Heart left ventricle (tissue), 16 donors: ENCODE measurements at regions of chr5 and their contacts with region 1.

Region 1: GRCh38 chr5:145953202-145953601 is 16.8 kb downstream of the SH3RF2 start:
- DNase-seq: no peak
- ATAC-seq: peak in 3 of 4 donors; percentile 47 to 52 (median 49)
- H3K4me3 ChIP-seq: no peak overlapping the region
- H3K27ac ChIP-seq: no peak overlapping the region
- H3K4me1 ChIP-seq: peaks cover 0 to 38% (median 4%) of the 10 kb centered on the region in 12 donors
- H3K27me3 ChIP-seq: no peaks in the 10 kb centered on the region
- CTCF ChIP-seq: no peak
- POLR2A ChIP-seq: no peak

Region 2: DNA sequence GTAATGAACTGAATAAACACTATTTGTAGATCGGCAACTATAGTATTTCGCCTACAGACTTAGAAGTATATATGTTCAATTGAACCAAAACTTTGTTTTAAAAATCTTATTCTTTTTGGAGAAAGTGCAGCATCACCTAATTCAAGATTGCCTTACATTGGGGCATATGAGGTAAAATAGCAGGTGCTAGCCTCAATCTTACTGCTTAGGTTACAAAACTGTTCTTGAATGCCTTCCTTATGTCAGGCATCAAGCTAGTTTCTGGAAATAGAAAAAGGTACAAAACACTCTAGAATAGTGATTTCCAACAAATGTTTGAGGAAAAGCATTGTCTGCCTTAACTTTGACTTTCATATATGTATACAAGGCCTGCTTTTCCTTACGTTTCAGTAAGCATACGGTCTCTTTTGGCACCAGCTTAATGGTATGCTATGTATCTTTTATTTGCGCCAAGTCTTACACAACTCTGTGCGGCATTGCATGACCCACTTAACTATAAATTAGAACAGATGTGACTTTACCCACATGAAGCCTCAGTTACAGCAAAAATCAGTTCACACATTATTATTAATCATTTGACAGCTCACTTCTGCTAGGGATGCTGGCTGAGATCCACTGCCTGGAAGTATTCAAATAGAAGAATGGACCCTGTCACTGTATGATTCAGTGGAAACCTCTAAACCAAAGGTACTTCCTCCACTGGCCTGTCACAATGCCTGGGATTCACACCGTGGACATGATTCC is 292.1 kb before region 1 on chr5:
- intact Hi-C with region 1: no loop called
- DNase-seq: no peak
- ATAC-seq: no peak
- H3K4me3 ChIP-seq: no peak overlapping the region
- H3K27ac ChIP-seq: no peak overlapping the region
- H3K4me1 ChIP-seq: peaks cover 0 to 13% (median 0%) of the 10 kb centered on the region in 12 donors
- H3K27me3 ChIP-seq: no peaks in the 10 kb centered on the region
- CTCF ChIP-seq: no peak
- POLR2A ChIP-seq: no peak

Region 3: GRCh38 chr5:145797336-145797735 is 155.9 kb before region 1 on chr5:
- intact Hi-C with region 1: no loop called
- DNase-seq: no peak
- ATAC-seq: no peak
- H3K4me3 ChIP-seq: no peak overlapping the region
- H3K27ac ChIP-seq: no peak overlapping the region
- H3K4me1 ChIP-seq: peaks cover 0 to 13% (median 0%) of the 10 kb centered on the region in 12 donors
- H3K27me3 ChIP-seq: no peaks in the 10 kb centered on the region
- CTCF ChIP-seq: no peak
- POLR2A ChIP-seq: no peak

Region 4: DNA sequence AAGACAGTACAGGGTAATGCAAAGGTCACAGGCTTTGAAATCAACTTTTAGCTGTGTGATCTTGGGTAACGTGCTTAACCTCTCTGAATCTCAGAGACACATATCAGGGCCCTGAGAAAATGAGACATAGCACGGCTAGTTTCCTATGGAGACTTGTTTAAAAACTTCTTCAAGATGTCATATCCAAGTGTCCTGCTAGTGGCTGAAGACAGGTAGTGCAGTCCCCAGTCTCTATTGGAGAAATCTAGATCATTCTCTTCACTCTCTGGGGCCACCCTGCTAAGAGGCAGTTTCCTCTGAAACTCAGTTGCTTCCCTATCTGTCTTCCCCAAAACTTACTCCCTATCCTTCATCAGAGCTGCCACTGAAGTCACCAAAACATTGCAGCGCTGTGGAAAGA is 50.1 kb before region 1 on chr5:
- intact Hi-C with region 1: no loop called
- DNase-seq: no peak
- ATAC-seq: no peak
- H3K4me3 ChIP-seq: no peak overlapping the region
- H3K27ac ChIP-seq: no peak overlapping the region
- H3K4me1 ChIP-seq: no peaks in the 10 kb centered on the region
- H3K27me3 ChIP-seq: no peaks in the 10 kb centered on the region
- CTCF ChIP-seq: peak in 2 of 12 donors; percentile 27 to 30
- POLR2A ChIP-seq: no peak

Region 5: GRCh38 chr5:145965804-145966203 is 12.6 kb after region 1 on chr5:
- intact Hi-C with region 1: loop called in 1 of 10 experiments (anchors 2 kb)
- DNase-seq: no peak
- ATAC-seq: no peak
- H3K4me3 ChIP-seq: no peak overlapping the region
- H3K27ac ChIP-seq: no peak overlapping the region
- H3K4me1 ChIP-seq: peaks cover 0 to 8% (median 0%) of the 10 kb centered on the region in 12 donors
- H3K27me3 ChIP-seq: no peaks in the 10 kb centered on the region
- CTCF ChIP-seq: no peak
- POLR2A ChIP-seq: no peak